AG04449 (cell line): ENCODE measurements at regions of chr6 and their contacts with region 1.

Region 1: DNA sequence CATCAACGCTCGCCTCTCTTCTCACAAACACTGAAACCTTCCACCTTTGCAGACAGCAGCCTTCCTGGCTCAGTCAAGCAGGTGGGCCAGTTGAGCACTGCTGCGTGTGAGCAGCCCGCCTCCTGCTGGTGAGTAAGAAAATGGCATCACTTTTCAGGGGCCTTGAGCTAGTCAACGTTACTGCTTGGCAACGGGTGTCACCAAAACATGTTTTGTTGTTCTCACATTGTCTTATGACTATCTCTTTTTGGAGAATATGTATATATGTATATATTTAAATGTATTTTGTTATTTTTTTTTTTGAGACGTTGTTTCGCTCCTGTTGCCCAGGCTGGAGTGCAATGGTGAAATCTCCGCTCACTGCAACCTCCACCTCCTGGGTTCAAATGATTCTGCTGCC is 97.0 kb upstream of the AGPAT4 start:
- DNase-seq: no peak
- H3K4me3 ChIP-seq: no peak overlapping the region
- CTCF ChIP-seq: peak; percentile 95

Region 2: GRCh38 chr6:160520043-160520904 is 850.6 kb before region 1 on chr6:
- CTCF ChIA-PET with region 1: interaction called, 70 read pairs
- POLR2A ChIA-PET with region 1: interaction called, 3 read pairs
- DNase-seq: no peak
- H3K4me3 ChIP-seq: peak overlapping the region; percentile 65
- CTCF ChIP-seq: no peak

Region 3: DNA sequence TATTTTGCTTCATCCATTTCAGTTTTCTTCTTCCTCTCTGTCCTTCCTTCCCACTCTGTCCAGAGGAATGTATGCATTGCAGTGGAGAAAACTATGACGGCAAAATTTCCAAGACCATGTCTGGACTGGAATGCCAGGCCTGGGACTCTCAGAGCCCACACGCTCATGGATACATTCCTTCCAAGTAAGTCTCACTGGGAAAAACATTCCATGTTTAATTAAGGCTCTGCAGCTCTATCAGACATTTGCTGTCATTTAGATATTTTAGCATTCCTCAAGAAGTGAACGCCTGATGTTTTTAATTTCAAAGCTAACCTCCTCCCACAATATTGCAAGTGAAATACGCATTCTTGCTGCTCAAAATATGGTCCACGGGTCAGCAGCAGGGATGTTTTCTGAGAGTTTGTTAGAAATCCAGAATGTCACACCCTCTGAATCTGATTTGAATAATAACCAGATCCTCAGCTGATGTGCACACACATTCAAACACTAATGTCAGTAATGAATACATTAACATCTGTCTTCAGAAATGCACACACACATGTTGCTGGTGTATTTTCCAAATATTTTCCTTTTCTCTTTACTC is 656.1 kb before region 1 on chr6:
- CTCF ChIA-PET with region 1: no interaction called
- POLR2A ChIA-PET with region 1: no interaction called
- DNase-seq: no peak
- H3K4me3 ChIP-seq: no peak overlapping the region
- CTCF ChIP-seq: no peak

Region 4: GRCh38 chr6:160992061-160992979 is 378.6 kb before region 1 on chr6:
- CTCF ChIA-PET with region 1: interaction called, 11 read pairs
- POLR2A ChIA-PET with region 1: no interaction called
- DNase-seq: no peak
- H3K4me3 ChIP-seq: peak overlapping the region; percentile 82
- CTCF ChIP-seq: peak; percentile 72

Region 5: DNA sequence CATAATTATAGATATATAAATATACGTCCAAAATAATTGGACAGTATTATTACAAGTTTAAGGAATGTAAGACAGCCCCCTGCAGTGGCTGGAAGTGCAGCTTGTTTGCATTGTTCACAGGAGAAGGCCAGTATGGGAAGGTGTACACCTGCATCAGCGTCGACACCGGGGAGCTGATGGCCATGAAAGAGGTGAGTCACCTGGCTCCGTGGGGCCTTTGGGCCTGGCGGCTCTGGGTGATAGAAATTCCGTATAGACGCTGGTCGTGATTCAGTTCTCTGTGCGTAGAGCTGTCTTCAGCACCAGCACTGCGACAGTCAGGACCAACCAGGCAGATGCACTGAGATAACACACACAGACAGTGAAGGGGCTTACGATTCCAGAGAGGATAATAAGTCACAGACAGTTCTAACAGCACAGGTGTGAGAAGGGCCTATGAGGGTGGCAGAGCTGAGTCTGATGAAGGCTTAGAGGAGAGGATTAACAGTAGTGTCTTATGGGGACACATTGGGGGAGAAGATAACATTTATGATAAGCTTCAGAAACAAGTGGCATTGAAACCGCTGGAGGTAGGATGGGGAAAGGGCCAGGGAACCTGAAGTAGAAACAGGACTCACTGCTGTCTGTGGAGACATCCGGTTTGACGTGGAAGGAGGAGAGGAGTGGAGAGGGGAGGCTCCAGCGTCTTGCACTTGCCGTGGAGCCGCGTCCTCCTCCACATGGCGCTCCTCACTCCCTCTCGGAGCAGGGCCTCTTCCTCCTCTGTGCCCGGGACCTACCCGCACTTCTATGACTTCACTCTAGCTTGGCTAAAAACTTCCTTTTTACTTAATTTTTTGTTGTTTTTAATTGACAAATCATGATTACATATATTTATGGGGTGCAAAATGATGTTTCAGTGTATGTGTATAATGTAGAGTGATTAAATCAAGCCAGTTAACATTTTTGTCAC is 262.8 kb before region 1 on chr6:
- CTCF ChIA-PET with region 1: interaction called, 33 read pairs
- POLR2A ChIA-PET with region 1: no interaction called
- DNase-seq: no peak
- H3K4me3 ChIP-seq: no peak overlapping the region
- CTCF ChIP-seq: no peak

Region 6: DNA sequence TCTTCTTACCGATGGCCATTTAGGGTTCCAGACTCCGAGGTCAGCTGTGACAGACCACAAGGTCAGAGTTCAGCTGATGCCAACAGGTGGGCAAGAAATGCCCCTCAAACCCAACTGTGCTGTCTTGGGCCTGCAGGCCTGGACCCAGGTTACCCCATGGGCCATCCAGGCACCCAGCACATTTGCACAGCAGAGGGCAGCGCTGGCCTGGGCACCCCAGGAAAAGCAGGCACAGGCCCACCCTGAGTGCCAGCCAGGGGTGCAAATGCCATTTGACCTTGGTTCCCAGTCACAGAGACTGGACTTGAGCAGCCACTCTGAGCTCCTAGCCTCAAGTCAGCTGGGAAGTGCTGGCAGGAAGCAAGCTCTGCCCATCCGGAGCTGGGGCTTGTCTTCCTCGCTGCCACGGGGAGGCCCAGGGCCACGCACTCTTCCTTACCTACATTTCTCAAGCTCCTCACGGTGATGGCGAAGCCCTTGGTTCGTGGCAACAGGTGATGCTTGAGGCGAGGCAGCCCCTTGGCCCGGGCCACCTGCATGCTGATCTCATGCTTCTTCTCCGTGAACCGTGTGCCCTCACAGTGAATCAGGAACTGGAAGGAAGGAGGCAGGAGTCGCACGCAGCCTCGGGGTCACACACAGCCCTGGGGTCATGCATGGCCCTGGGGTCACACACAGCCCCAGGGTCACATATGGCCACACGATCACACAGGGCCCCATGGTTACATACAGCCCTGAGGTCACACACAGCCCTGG is 217.8 kb before region 1 on chr6:
- CTCF ChIA-PET with region 1: interaction called, 156 read pairs
- POLR2A ChIA-PET with region 1: no interaction called
- DNase-seq: no peak
- H3K4me3 ChIP-seq: no peak overlapping the region
- CTCF ChIP-seq: peak; percentile 58

Region 7: GRCh38 chr6:161359618-161359945 is 11.3 kb before region 1 on chr6:
- CTCF ChIA-PET with region 1: interaction called, 18 read pairs
- POLR2A ChIA-PET with region 1: no interaction called
- DNase-seq: no peak
- H3K4me3 ChIP-seq: no peak overlapping the region
- CTCF ChIP-seq: no peak